OCI-LY7 (cell line): ENCODE measurements at regions of chr14 and their contacts with region 1.

Region 1: GRCh38 chr14:42224053-42224888 is 617.6 kb downstream of the LRFN5 start:
- DNase-seq: peak; percentile 64
- H3K4me3 ChIP-seq: no peak overlapping the region
- H3K27ac ChIP-seq: no peak overlapping the region
- H3K4me1 ChIP-seq: peaks cover 12% of the 10 kb centered on the region
- CTCF ChIP-seq: peak; percentile 98

Region 2: GRCh38 chr14:42140831-42141279 is 83.4 kb before region 1 on chr14:
- CTCF ChIA-PET with region 1: no interaction called
- POLR2A ChIA-PET with region 1: no interaction called
- intact Hi-C with region 1: no loop called
- DNase-seq: no peak
- H3K4me3 ChIP-seq: no peak overlapping the region
- H3K27ac ChIP-seq: no peak overlapping the region
- H3K4me1 ChIP-seq: no peaks in the 10 kb centered on the region
- CTCF ChIP-seq: no peak

Region 3: DNA sequence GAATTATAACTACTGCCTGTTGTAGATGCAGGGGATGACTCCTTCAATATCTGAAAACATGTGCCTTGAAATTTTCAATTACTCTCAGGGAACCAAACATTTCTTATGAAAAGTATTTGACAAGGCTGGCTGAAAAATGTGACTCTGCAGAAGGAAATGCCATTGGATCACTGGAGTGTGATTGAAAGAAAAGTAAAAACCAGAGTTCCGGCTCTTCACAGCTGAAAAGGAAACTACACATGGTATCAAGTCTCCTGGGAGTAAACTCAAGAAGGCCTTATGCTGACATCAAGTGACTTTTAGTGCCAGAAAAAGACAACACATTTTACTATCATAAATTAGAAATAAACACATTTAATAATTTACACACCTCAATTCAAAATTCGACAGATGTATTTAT is 75.4 kb after region 1 on chr14:
- CTCF ChIA-PET with region 1: no interaction called
- POLR2A ChIA-PET with region 1: no interaction called
- intact Hi-C with region 1: loop called (anchors 1 kb)
- DNase-seq: peak; percentile 94
- H3K4me3 ChIP-seq: peak overlapping the region; percentile 50
- H3K27ac ChIP-seq: peak overlapping the region; percentile 82
- H3K4me1 ChIP-seq: peaks cover 25% of the 10 kb centered on the region
- CTCF ChIP-seq: no peak